GM12878 (cell line): ENCODE measurements at regions of chr1 and their contacts with region 1.

Region 1: DNA sequence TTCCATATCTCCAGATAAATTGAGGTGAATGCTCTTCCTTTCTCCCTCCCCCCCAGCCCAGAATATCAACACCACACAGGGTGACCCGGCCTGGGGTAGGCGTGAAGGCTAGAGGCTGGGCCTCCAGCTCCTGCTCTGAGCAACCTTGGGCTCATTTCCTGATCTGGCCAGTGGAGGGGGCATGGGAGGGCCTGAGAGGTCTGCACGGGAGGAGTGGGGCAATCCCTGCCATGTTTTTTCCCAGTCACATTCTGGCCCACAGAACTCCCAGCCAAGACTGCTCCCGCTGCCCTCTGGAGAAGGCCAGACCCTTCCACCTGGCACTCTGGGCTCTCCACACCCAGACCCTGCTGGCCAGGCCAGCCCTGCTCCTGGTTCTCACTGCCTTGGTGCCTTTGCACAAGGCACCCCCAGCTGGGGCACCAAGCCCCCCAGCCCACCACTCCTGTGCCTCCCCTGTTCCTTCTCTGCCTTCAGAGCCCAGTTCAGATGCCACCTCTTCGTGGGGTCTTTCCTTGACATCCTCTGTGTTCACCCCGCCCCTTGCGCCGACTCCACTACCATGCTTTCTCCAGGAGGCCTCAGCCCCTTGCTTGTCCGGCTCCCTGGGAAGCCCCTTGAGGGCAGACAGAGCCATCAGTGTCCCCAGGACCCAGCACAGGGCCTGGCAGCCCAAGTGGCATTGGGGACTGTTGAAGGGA is 3.7 kb downstream of the CLDN19 start:
- DNase-seq: no peak
- ATAC-seq: peak; percentile 69
- H3K4me3 ChIP-seq: no peak overlapping the region
- H3K27ac ChIP-seq: no peak overlapping the region
- H3K4me1 ChIP-seq: peaks cover 11% of the 10 kb centered on the region
- H3K27me3 ChIP-seq: no peaks in the 10 kb centered on the region
- CTCF ChIP-seq: peak in 2 of 3 experiments; percentile 7 to 40; a peak in 1 of 6 replicates
- EP300 ChIP-seq: no peak
- POLR2A ChIP-seq: no peak
- RAD21 ChIP-seq: no peak

Region 2: DNA sequence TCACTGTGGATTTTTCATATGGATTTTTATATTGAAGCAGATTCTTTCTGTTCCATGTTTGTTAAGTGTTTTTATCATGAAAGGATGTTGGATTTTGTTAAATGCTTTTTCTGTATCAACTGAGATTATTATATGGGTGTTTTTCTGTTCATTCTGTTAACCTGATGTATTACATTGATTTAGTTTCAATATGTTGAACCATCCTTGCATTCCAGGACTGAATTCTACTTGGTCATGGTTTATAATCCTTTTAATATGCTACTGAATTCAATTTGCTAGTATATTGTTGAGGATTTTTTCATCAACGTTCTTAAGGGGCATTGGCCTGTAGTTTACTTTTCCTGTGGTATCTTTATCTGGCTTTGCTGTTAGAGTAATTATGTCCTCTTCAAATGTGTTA is 217.4 kb before region 1 on chr1:
- CTCF ChIA-PET with region 1: no interaction called
- POLR2A ChIA-PET with region 1: no interaction called
- RAD21 ChIA-PET with region 1: no interaction called
- SMC1A ChIA-PET with region 1: no interaction called
- in situ Hi-C with region 1: no loop called
- intact Hi-C with region 1: no loop called
- DNase-seq: no peak
- ATAC-seq: no peak
- H3K4me3 ChIP-seq: no peak overlapping the region
- H3K27ac ChIP-seq: no peak overlapping the region
- H3K4me1 ChIP-seq: no peaks in the 10 kb centered on the region
- H3K27me3 ChIP-seq: no peaks in the 10 kb centered on the region
- CTCF ChIP-seq: no peak
- EP300 ChIP-seq: no peak
- POLR2A ChIP-seq: no peak
- RAD21 ChIP-seq: no peak

Region 3: DNA sequence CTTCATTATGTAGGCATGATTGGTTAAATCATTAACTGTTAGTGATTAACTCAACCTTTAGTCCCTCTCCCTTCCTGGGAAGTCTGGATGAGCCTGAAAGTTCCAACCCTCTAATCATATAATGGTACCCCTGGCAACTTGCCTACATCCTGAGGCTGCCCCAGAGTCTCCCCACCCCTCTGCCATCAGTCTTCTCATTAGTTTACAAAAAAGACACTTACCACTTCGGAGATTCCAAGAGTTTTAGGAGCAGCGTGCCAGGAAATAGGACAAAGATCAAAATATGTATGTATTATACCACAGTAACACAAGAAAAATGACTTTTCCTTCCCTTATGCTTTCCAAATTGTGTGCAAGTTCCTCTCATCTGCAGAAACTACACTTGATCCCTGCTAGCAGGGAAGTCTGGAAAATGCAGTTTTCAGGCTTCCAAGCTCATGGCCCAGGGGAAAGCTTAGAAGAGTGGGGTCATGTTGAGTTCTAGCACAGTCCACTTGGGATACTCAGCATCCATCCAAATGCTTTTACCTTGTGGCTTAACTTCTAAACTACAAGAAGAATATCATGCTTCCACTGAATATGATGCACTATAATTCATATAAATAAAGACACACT is 142.7 kb before region 1 on chr1:
- CTCF ChIA-PET with region 1: no interaction called
- POLR2A ChIA-PET with region 1: no interaction called
- RAD21 ChIA-PET with region 1: no interaction called
- SMC1A ChIA-PET with region 1: no interaction called
- in situ Hi-C with region 1: loop called (anchors 10 kb)
- intact Hi-C with region 1: no loop called
- DNase-seq: no peak
- ATAC-seq: no peak
- H3K4me3 ChIP-seq: no peak overlapping the region
- H3K27ac ChIP-seq: no peak overlapping the region
- H3K4me1 ChIP-seq: no peaks in the 10 kb centered on the region
- H3K27me3 ChIP-seq: no peaks in the 10 kb centered on the region
- CTCF ChIP-seq: no peak
- EP300 ChIP-seq: no peak
- POLR2A ChIP-seq: no peak
- RAD21 ChIP-seq: no peak